ENCODE measurements at regions of chr3 and their contacts with region 1.

Region 1: GRCh38 chr3:57158813-57159738 is 6.1 kb downstream of the IL17RD start:
- DNase-seq: peak; percentile 31
- ATAC-seq: peak; percentile 65
- H3K4me3 Mint-ChIP-seq: peak overlapping the region; percentile 22
- H3K27ac Mint-ChIP-seq: peak overlapping the region; percentile 96
- H3K4me1 Mint-ChIP-seq: peaks cover 93% of the 10 kb centered on the region
- H3K27me3 Mint-ChIP-seq: peaks cover 16% of the 10 kb centered on the region
- CTCF ChIP-seq: no peak

Region 2: GRCh38 chr3:56939834-56940233 is 219.2 kb before region 1 on chr3:
- CTCF ChIA-PET with region 1: no interaction called
- POLR2A ChIA-PET with region 1: no interaction called
- DNase-seq: no peak
- ATAC-seq: peak; percentile 74
- H3K4me3 Mint-ChIP-seq: no peak overlapping the region
- H3K27ac Mint-ChIP-seq: no peak overlapping the region; the same call in 1 of the 2 replicates
- H3K4me1 Mint-ChIP-seq: no peaks in the 10 kb centered on the region
- H3K27me3 Mint-ChIP-seq: peaks cover 3% of the 10 kb centered on the region
- CTCF ChIP-seq: no peak

Region 3: GRCh38 chr3:56997675-56998074 is 161.4 kb before region 1 on chr3:
- CTCF ChIA-PET with region 1: no interaction called
- POLR2A ChIA-PET with region 1: no interaction called
- DNase-seq: no peak
- ATAC-seq: no peak
- H3K4me3 Mint-ChIP-seq: no peak overlapping the region
- H3K27ac Mint-ChIP-seq: no peak overlapping the region
- H3K4me1 Mint-ChIP-seq: peaks cover 14% of the 10 kb centered on the region
- H3K27me3 Mint-ChIP-seq: no peaks in the 10 kb centered on the region
- CTCF ChIP-seq: no peak

Region 4: DNA sequence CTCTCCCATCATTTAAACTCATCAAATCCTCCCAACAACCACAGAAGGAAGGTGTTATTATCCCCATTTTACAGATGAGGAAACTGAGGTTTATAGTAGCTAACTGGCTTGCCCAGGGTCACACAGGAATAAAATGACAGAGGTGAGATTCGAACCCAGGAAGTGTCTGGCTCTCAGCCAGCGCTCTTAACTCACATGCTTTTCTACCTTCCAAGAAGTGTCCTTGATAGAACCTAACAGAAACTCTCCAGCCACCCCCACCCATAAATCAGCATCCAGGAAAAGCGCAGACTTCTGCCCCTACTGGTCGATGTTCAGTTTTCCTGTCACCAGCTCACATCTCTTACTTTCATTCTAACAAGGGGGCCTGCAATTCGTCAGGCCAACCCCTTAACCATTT is 46.9 kb before region 1 on chr3:
- CTCF ChIA-PET with region 1: interaction called, 15 read pairs
- POLR2A ChIA-PET with region 1: interaction called, 3 read pairs
- DNase-seq: peak; percentile 34
- ATAC-seq: no peak; the same call in 1 of the 2 replicates
- H3K4me3 Mint-ChIP-seq: no peak overlapping the region
- H3K27ac Mint-ChIP-seq: peak overlapping the region; percentile 11; the same call in 1 of the 2 replicates
- H3K4me1 Mint-ChIP-seq: peaks cover 56% of the 10 kb centered on the region
- H3K27me3 Mint-ChIP-seq: no peaks in the 10 kb centered on the region
- CTCF ChIP-seq: no peak

Region 5: DNA sequence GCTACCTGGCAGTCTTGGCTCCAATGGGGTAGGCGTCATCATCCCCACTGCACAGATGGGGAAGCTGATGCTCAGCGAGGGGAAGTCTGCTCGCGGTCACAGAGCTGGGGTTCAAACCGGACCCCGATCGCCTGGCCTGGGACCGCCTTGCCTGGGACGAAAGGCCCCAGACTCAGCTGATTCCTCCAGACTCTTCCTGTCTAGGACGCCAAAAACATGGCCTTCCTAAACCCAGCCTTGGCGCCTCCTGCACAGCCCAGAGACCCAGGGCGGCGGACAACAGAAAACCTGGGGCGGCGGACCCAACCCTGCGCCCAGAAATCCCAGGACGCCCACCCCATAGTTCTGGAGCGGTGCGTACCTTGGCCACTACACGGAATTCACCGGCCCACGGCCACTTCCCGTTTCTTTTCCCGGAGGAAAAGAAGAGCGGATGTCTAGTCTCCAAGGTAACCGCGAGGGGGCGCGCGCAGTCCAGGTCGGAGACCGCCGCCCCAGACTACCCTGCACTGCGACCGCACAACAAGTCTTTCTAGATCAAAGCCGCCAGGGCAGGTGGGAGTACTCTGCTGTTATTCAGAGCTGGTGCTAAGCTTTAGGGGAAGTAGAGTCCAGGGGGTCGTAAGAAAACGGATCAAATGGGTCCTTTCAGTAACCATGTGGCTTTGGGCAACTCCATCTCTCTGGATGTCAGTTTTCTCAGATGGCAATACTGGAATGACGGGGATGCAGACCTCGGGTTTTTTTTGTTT is 11.0 kb after region 1 on chr3:
- CTCF ChIA-PET with region 1: interaction called, 12 read pairs
- POLR2A ChIA-PET with region 1: no interaction called
- DNase-seq: peak; percentile 90
- ATAC-seq: peak; percentile 83
- H3K4me3 Mint-ChIP-seq: peak overlapping the region; percentile 57
- H3K27ac Mint-ChIP-seq: peak overlapping the region; percentile 72; the same call in 1 of the 2 replicates
- H3K4me1 Mint-ChIP-seq: peaks cover 36% of the 10 kb centered on the region
- H3K27me3 Mint-ChIP-seq: peaks cover 22% of the 10 kb centered on the region
- CTCF ChIP-seq: peak; percentile 75